Head of caudate nucleus (tissue), 42 donors: ENCODE measurements at regions of chr1 and their contacts with region 1.

Region 1: GRCh38 chr1:10507111-10507879 is 32.5 kb downstream of the PEX14 start:
- DNase-seq: peak in 41 of 42 donors; percentile 32 to 83 (median 58)

Region 2: GRCh38 chr1:10438677-10439163 is 68.6 kb before region 1 on chr1:
- intact Hi-C with region 1: no loop called
- DNase-seq: no peak

Region 3: DNA sequence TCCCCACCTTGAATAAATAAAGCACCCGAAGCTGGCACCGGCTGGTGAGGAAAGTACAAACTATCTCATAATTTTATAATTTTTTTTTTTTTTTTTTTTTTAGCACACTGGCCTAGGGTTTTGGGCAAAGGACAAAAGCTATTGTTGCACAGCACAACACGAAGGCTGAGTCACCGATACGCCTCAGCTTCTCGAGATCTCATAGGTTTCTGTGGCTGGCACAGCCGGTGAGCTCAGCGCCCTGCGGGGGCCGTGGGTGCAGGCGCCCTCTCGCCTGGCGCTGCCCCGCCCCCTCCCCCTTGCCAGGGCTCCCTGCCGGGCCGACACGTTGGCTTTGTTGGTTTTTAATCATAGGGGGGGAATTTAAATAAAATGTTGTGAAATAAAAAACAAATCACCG is 271.9 kb after region 1 on chr1:
- intact Hi-C with region 1: no loop called
- DNase-seq: peak in 25 of 42 donors; percentile 20 to 79 (median 47)

Region 4: DNA sequence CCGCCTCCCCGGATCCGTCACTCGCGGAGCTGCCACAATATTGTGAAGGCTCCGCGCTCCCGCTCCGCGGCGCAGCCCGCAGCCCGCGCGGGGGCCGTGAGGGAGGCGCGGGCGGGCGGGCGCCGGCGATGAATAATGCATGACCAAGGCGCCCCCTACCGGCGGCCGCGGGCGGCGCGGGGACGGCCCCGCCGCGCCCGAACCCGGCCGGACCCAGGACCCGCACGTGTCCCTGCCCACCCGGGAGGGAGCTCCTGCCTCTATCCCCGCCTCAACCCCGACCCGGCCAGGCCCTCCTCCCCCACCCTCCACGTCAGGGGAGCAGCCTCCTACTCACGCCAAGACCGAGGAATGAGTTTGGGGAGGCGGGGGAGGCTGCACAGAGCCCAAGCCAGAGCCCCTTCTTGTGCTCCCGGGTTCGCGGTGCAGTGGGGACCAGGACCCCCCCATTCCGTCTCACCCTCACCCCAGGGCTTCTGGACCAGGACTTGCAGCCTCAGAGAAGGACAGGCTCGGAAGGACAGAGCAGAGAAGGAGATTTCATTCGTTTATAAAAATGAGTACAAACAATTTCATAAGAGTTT is 359.9 kb after region 1 on chr1:
- intact Hi-C with region 1: loop called (anchors 10 kb)
- DNase-seq: peak in 40 of 42 donors; percentile 16 to 82 (median 59)

Region 5: DNA sequence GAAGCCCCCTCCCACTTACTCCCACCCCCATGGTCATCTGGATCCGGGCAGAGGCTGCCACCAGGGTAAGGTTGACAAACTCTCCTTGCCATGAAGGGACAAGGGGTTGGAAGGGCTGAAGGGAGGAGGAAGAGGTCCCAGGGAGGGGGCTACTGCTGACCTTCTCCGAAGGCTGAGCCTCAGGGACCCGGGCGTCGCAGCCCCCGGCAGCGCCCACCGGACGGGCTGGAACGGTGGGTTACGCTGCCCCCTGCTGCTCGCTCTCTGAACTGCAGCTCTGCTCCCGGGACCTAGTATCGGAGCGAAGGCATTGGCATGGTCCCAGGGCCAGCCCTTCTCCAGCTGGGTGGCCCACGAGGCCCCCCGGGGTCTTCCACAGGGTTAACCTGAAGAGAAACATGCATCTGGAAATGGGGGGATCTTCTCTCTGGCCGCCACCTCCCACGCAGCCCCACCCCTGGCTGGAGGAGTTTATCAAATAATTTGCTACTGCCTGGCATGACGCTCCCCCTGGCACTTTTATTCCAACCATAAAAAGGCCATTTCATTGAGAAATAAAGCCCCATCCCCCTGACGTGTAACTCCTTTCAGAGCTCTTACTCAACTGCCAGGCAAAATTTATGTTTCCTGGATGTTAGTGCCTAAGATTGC is 434.7 kb after region 1 on chr1:
- intact Hi-C with region 1: loop called (anchors 10 kb)
- DNase-seq: peak in 39 of 42 donors; percentile 31 to 85 (median 65)